Esophagus squamous epithelium (tissue), 5 donors: ENCODE measurements at regions of chr20 and their contacts with region 1.

Region 1: DNA sequence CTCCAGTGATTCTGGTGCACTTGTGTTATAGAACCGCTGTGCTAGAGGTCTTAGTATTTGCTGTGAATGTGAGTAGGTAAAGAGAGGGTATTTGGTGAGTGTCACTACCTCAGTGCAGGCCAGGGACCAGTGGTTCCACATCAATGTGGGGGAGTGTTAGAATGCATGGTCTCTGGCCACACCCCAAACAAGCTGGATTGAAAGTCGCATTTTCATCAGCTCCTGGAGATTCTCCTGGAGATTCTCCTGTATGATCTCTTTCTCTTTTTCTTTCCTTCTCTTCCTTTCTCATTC is 26.8 kb upstream of the BCAS1 start:
- DNase-seq: no peak
- H3K4me3 ChIP-seq: no peak overlapping the region
- H3K27ac ChIP-seq: no peak overlapping the region
- H3K4me1 ChIP-seq: no peaks in the 10 kb centered on the region
- H3K27me3 ChIP-seq: peaks cover 0 to 14% (median 0%) of the 10 kb centered on the region in 4 donors
- CTCF ChIP-seq: no peak
- POLR2A ChIP-seq: no peak

Region 2: DNA sequence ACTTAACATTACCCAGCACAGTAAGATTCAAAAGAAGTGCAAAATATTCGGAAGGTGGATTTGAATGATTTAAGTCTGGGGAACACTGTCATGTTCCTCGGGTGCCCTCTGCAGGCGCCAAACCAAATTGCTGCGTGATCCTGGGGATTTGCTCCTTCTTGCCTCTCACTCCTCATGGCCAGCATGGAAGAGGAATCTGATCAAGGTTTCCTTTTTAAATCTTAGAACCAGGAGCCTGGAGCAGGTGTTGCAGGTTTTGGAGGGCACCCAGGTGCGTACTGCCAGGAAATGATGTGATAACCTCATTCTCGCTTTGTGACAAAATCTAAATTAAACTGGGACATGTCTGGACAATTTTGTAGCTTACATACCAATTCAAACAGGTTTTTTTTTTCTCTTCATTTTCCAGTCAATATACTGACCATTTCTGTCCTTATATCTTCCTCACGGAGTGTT is 102.6 kb after region 1 on chr20:
- intact Hi-C with region 1: loop called (anchors 5 kb)
- DNase-seq: no peak
- H3K4me3 ChIP-seq: no peak overlapping the region
- H3K27ac ChIP-seq: no peak overlapping the region
- H3K4me1 ChIP-seq: peaks cover 0 to 32% (median 0%) of the 10 kb centered on the region in 3 donors
- H3K27me3 ChIP-seq: no peaks in the 10 kb centered on the region
- CTCF ChIP-seq: peak; percentile 64 to 92 (median 86)
- POLR2A ChIP-seq: no peak

Region 3: DNA sequence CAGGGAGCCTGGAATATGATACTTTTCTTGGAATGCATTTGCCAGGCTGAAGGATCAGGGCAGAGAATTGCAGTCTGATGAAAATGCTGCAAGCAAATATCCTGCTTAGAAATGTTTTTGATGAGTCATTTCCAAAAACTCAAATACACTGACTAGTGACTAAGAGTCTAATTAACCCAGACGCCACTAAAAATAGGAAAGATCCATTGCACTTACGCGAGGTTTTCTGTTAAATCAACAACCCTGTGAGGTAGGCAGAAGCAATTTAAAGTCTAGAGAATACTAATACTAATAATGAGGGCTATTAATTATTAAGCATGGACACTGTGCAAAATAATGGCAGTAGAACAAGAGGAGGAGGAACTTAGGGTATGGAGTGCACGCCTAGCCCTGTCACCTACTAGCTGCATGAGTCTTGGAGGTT is 248.1 kb after region 1 on chr20:
- intact Hi-C with region 1: no loop called
- DNase-seq: no peak
- H3K4me3 ChIP-seq: no peak overlapping the region
- H3K27ac ChIP-seq: no peak overlapping the region
- H3K4me1 ChIP-seq: peaks cover 0 to 13% (median 7%) of the 10 kb centered on the region in 3 donors
- H3K27me3 ChIP-seq: no peaks in the 10 kb centered on the region
- CTCF ChIP-seq: no peak
- POLR2A ChIP-seq: no peak

Region 4: DNA sequence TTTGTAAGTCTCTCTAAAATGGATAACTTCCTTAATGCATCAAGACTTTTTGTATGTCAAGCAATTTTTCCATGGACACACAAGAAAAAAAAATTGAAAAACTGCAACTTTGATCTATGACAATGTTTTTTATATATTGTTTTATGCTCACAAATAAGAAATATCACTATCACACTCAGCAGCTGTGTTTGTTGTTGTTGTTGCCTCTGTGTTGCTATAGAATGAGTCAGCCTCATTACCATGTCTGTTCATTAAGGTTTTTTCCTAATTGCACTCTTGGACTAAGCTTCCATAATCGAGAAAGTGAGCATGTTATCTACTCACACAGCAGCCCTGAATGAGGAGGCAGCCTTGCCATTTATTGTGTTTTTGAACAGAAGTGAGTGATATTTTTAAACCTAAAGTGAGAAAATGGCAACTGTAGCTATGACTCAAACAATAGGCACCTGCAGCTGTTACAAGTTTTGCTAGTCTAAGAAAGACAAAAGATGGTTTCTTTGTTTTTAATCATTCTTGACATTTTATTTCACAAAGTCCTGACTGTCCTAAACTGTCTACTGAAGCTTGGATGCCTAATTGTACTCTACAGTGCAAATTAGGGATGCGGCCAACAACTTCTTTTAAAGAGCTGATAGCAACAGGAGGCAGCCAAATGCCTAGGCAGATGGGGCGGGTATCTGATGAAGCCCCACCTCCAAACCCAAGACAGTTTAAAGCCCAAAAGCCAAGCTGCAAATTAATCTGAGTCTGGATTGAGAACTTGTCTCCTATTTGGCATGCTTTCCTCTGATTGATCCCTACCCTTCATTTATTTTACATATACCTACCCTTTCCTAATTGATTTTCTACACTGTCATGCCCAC is 300.3 kb after region 1 on chr20:
- intact Hi-C with region 1: no loop called
- DNase-seq: no peak
- H3K4me3 ChIP-seq: no peak overlapping the region
- H3K27ac ChIP-seq: no peak overlapping the region
- H3K4me1 ChIP-seq: no peaks in the 10 kb centered on the region
- H3K27me3 ChIP-seq: no peaks in the 10 kb centered on the region
- CTCF ChIP-seq: no peak
- POLR2A ChIP-seq: no peak